GM13977 (cell line): ENCODE measurements at regions of chr2 and their contacts with region 1.

Region 1: GRCh38 chr2:30711646-30712085 is 95.6 kb downstream of the CAPN13 start:
- DNase-seq: peak; percentile 79
- CTCF ChIP-seq: peak; percentile 100

Region 2: DNA sequence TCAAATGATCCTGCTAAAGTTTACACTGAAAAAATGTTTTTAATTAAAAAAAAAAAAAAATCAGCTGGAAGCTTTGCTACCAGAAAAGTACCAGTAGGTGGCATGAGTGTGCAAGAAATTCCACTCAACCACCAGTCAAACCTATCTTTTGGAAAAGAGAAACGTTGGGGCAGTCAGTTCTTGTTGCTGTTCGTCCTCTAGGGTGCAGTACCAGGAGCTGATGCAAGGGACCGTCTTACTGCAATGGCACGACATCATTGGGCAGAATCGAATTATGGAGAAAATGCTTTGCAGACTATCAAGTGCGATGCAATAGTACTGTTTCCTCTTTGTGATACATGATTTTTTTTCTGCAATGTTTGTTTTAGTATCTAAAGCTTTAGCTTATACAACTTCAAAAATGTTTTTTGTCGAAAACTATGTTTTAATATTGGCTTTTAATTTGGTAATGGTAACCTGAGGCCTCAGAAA is 546.6 kb before region 1 on chr2:
- in situ Hi-C with region 1: loop called (anchors 10 kb)
- DNase-seq: peak; percentile 83
- CTCF ChIP-seq: peak; percentile 67

Region 3: GRCh38 chr2:30208452-30208851 is 503.2 kb before region 1 on chr2:
- in situ Hi-C with region 1: loop called (anchors 10 kb)
- DNase-seq: peak; percentile 39
- CTCF ChIP-seq: peak; percentile 81

Region 4: DNA sequence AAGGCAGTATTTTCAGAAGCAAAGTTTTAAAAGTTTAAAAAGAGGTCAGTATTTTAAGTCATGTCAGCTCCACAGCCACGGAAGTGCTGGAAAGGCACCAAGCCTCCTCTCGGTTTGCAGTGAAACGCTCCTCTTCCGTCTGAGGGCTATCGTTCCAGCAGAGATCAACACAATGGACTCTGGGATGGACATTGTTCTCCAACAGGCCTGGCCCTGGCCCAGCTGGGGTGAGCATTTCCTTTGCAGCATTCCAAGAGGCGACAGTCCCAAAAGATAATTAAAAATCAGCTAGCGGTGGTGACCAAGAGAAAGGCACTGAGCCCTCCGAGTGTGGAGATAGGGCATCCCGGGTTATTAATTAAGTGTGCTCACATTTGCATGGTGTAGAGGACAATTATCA is 360.6 kb before region 1 on chr2:
- in situ Hi-C with region 1: no loop called
- DNase-seq: no peak
- CTCF ChIP-seq: no peak

Region 5: DNA sequence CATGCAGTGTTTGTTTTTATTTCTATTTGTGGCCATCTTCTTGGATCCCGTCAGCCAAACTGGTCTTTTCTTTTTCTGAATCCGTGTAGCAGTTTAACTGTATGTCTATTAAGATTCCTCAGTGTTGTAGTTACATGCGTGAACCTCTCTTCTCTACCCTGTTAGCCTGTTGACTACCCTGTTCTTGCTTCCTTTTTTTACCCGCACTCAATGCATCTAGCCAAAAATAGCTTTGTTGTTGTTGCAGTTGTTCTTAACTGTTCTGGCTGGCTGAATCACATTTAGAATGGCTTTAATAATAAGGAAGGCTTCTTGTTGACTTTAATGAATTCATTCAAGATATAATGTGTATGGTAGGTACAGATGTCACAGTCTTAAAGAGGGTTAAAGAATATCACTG is 127.5 kb before region 1 on chr2:
- in situ Hi-C with region 1: no loop called
- DNase-seq: peak; percentile 28
- CTCF ChIP-seq: no peak

Region 6: DNA sequence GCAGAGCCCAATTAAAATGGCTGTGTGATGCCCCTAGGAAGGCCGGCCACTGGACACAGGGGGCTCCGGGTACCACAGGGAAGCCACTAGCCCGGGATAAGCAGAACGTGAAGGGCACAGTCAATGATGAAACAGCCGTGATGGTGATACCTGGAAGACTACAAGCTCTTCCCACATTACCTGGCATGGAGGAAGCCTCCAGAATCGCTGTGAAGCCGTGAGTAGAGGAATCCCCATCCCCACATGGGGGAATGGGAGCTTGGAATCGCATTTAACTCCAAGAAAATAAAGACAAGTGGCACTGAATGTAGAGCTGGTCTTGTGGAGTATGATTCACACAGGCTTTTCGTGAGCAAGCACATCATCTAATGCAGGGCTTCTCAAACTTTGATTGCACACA is 410.5 kb after region 1 on chr2:
- in situ Hi-C with region 1: no loop called
- DNase-seq: no peak
- CTCF ChIP-seq: no peak

Region 7: GRCh38 chr2:31170071-31170698 is 458.5 kb after region 1 on chr2:
- in situ Hi-C with region 1: loop called (anchors 25 kb)
- DNase-seq: peak; percentile 71
- CTCF ChIP-seq: peak; percentile 94